Mammary epithelial cell (primary cell): ENCODE measurements at regions of chr6 and their contacts with region 1.

Region 1: GRCh38 chr6:71510057-71510713 is 221.6 kb downstream of the OGFRL1 start:
- DNase-seq: peak; percentile 58
- H3K4me3 ChIP-seq: no peak overlapping the region
- H3K27ac ChIP-seq: no peak overlapping the region
- H3K4me1 ChIP-seq: peaks cover 2% of the 10 kb centered on the region
- H3K27me3 ChIP-seq: no peaks in the 10 kb centered on the region
- CTCF ChIP-seq: peak; percentile 61 to 72

Region 2: GRCh38 chr6:71082033-71082641 is 428.0 kb before region 1 on chr6:
- CTCF ChIA-PET with region 1: no interaction called
- dilution Hi-C with region 1: no loop called
- in situ Hi-C with region 1: no loop called
- intact Hi-C with region 1: no loop called
- DNase-seq: no peak
- H3K4me3 ChIP-seq: no peak overlapping the region
- H3K27ac ChIP-seq: no peak overlapping the region
- H3K4me1 ChIP-seq: peaks cover 6% of the 10 kb centered on the region
- H3K27me3 ChIP-seq: no peaks in the 10 kb centered on the region
- CTCF ChIP-seq: no peak

Region 3: DNA sequence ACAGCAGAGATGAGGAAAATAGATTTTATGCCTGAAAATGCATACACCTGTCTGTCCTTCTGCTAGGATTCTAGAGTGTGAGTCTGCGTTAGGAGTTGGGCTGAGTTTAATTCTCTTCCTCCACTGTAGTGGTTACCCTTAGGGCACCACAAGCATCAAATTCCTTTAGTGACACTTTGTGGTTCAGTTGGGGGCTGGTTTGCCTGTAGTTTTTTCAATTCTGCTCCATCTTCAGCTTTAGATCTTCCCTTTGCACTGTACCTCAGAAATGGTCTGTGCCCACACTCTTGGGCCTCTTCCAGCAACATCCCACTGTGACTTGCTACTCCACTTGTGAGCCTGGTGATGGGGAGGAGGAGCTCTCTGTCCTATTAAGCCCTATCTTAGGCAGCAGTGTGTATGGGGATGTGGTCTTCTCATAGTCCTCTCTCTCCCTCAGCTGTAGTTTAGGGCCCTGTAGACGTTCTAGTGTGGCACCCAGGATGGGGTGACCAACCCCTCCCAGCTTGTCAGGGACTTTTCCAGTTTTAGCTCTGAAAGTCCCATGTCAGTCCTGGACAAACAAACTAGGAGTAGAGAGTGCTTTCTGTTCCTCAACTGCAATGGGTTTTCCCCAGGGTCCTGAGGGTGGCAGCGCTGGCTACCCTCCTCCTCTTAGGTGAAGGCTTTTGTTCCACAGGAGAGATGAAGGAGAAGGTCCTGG is 241.3 kb before region 1 on chr6:
- CTCF ChIA-PET with region 1: no interaction called
- dilution Hi-C with region 1: no loop called
- in situ Hi-C with region 1: no loop called
- intact Hi-C with region 1: no loop called
- DNase-seq: no peak
- H3K4me3 ChIP-seq: no peak overlapping the region
- H3K27ac ChIP-seq: no peak overlapping the region
- H3K4me1 ChIP-seq: no peaks in the 10 kb centered on the region
- H3K27me3 ChIP-seq: no peaks in the 10 kb centered on the region
- CTCF ChIP-seq: no peak

Region 4: DNA sequence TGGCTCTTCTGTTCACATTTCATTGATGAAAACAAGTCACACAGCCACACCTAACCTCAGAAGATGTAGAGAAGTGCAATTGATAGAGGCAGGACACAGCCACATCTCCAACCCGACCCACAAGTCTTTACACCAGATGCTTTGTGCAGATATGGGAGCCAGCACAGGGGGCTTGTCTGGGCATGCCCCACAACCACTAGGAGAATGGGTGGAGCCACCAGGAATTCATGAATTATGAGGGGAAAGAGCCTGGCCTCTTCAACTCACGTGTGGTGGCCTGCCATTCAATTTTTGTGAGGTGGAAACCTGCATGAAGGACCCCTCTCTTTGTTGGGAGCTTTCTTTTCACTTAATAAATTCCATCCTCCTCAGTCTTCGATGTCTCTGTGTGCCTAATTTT is 142.4 kb before region 1 on chr6:
- CTCF ChIA-PET with region 1: interaction called, 10 read pairs
- dilution Hi-C with region 1: no loop called
- in situ Hi-C with region 1: no loop called
- intact Hi-C with region 1: no loop called
- DNase-seq: peak; percentile 67
- H3K4me3 ChIP-seq: no peak overlapping the region
- H3K27ac ChIP-seq: peak overlapping the region; percentile 41
- H3K4me1 ChIP-seq: peaks cover 20% of the 10 kb centered on the region
- H3K27me3 ChIP-seq: no peaks in the 10 kb centered on the region
- CTCF ChIP-seq: no peak

Region 5: GRCh38 chr6:71678091-71678490 is 167.9 kb after region 1 on chr6:
- CTCF ChIA-PET with region 1: no interaction called
- dilution Hi-C with region 1: no loop called
- in situ Hi-C with region 1: no loop called
- intact Hi-C with region 1: no loop called
- DNase-seq: no peak
- H3K4me3 ChIP-seq: no peak overlapping the region
- H3K27ac ChIP-seq: no peak overlapping the region
- H3K4me1 ChIP-seq: no peaks in the 10 kb centered on the region
- H3K27me3 ChIP-seq: peaks cover 9% of the 10 kb centered on the region
- CTCF ChIP-seq: no peak